GM12878 (cell line): ENCODE measurements at regions of chr11 and their contacts with region 1.

Region 1: DNA sequence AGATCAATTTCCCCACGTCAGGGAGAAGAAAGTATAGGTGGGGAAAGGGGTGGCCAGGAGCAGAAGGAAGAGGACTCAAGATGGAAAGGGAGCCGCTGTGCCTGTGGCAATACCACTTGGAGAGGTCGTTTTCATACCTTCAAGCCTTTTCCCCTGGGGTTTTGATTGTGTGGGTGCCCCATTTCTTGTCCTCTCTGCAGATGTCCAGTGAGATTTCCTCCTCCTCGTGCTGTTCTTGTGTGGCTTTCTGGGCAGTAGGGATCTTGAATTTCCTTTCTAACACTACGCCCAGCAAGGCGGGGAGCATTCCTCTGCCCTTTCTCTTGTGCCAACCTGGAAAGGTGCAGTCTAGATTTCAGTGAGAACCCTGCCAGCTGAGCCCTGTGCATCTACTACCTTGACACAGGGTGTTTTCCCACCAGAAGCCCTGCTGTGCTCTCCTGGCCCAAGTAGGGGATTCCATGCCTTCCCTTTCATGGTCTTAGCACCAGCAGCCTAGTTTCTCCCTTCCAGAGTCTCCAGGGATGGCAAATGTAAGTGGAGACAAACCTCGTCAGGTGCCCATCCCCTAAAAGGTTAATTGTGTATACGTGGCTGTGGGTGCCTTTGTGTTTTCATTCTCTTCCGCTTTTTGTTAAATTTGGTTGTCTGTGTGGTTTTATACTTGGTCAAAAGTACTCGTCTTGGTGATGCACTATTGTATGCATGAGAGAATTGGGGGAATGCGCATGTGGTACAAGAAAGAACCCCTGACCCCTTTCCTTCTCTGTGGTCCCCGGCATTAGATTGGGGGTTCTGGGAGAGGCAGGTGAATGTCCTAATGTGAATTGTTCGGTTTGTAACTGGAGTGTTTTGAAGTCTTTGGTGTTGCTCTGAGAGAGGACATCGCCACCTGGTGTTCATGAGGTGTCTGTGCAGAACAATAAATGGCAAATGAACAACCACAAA is 71.4 kb upstream of the MPEG1 start:
- DNase-seq: peak; percentile 71
- ATAC-seq: peak; percentile 86
- H3K4me3 ChIP-seq: peak overlapping the region; percentile 37
- H3K27ac ChIP-seq: peak overlapping the region; percentile 63
- H3K4me1 ChIP-seq: peaks cover 18% of the 10 kb centered on the region
- H3K27me3 ChIP-seq: no peaks in the 10 kb centered on the region
- CTCF ChIP-seq: peak; percentile 81 to 83 (median 82)
- EP300 ChIP-seq: 0 out of 4 replicates have a peak, but pooled peaks of 1 of the 2 experiments have one; percentile 26
- POLR2A ChIP-seq: no peak
- RAD21 ChIP-seq: peak; percentile 84

Region 2: DNA sequence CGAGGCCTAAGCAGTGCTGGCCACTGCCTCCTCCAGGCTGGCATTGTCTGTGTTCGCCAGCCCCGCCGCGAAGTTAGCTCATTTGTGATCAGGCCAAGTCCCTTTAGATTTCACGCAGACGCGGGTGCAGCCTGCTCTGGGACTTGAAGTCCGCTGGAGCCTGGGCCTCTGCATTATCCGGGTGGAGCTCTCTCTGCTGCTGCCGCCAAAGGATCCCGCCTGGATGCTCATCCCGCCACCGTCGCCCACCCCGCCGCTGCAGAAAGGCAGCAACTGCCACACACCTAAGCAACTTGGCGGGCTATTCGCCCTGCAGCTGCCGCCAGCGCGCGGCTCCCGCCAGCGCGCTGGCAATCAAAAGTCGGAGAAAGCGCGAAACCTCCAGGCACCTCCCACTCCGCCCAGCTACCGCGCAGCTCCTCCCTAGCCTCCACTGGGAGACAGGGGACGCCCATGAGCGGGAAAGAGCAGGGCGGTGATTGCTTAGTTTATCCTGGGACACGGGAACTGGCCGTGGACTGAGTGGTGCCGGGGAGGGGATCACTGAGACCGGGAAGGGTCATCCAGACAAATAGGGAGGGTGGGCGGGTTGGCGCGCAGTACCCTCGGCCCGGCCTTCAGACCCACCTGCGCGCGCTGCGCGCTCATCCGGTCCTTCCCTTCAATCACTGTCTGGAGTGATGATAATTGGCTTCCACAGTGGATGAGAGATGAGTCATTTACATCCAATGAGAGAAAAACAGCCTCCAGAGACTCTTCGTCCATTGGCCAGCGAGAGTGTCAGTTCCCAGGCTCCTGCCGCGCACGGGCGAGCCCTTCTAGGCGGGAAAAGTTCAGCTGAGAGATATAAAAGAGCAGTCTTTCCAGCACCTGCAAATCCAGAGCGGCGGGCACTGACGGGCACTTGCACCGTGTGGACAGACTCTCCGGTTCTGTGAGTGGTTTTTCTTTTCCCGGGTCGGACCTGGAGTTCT is 177.4 kb before region 1 on chr11 and contains the start of gene FAM111B:
- CTCF ChIA-PET with region 1: no interaction called
- POLR2A ChIA-PET with region 1: no interaction called
- RAD21 ChIA-PET with region 1: no interaction called
- SMC1A ChIA-PET with region 1: no interaction called
- in situ Hi-C with region 1: no loop called
- intact Hi-C with region 1: loop called (anchors 10 kb)
- DNase-seq: peak; percentile 84
- ATAC-seq: peak; percentile 85
- H3K4me3 ChIP-seq: peak within 1 kb of the TSS; percentile 79
- H3K27ac ChIP-seq: peak within 1 kb of the TSS; percentile 89
- H3K4me1 ChIP-seq: peaks cover 7% of the 10 kb centered on the region
- H3K27me3 ChIP-seq: no peaks in the 10 kb centered on the region
- CTCF ChIP-seq: no peak
- EP300 ChIP-seq: no peak
- POLR2A ChIP-seq: peak; percentile 79
- RAD21 ChIP-seq: no peak
- polyA plus RNA-seq, gene FAM111B: 42.0 to 65.3 TPM

Region 3: DNA sequence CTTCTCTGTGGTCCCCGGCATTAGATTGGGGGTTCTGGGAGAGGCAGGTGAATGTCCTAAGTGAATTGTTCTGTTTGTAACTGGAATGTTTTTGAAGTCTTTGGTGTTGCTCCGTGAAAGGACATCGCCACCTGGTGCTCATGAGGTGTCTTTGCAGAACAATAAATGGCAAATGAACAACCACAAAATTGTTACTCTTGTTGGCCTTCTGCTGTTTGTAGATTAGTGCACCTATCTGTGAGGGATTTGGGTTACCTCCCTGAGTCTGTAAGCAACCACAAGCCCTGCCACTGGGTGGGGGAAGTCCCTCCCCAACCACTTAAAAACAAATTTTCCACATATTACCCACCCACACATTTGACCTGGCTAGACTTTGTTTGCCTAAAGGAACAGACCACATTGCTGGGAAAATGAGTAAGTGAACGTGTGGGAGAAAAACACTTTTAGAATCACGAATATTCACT is 76.1 kb before region 1 on chr11:
- CTCF ChIA-PET with region 1: interaction called, 10 read pairs
- POLR2A ChIA-PET with region 1: no interaction called
- RAD21 ChIA-PET with region 1: interaction called, 7 read pairs
- SMC1A ChIA-PET with region 1: interaction called, 4 read pairs
- in situ Hi-C with region 1: no loop called
- intact Hi-C with region 1: loop called (anchors 1 kb)
- DNase-seq: peak; percentile 89
- ATAC-seq: peak; percentile 77
- H3K4me3 ChIP-seq: peak overlapping the region; percentile 64
- H3K27ac ChIP-seq: peak overlapping the region; percentile 76
- H3K4me1 ChIP-seq: peaks cover 51% of the 10 kb centered on the region
- H3K27me3 ChIP-seq: no peaks in the 10 kb centered on the region
- CTCF ChIP-seq: peak; percentile 74 to 87 (median 78); a peak in 5 of 6 replicates
- EP300 ChIP-seq: peak; percentile 62 to 68; a peak in 3 of 4 replicates
- POLR2A ChIP-seq: no peak
- RAD21 ChIP-seq: peak; percentile 77

Region 4: GRCh38 chr11:59273373-59273841 is 10.7 kb before region 1 on chr11:
- CTCF ChIA-PET with region 1: interaction called, 6 read pairs
- POLR2A ChIA-PET with region 1: interaction called, 4 read pairs
- RAD21 ChIA-PET with region 1: interaction called, 4 read pairs
- SMC1A ChIA-PET with region 1: interaction called, 12 read pairs
- in situ Hi-C with region 1: no loop called
- intact Hi-C with region 1: no loop called
- DNase-seq: peak; percentile 79
- ATAC-seq: peak; percentile 93
- H3K4me3 ChIP-seq: no peak overlapping the region
- H3K27ac ChIP-seq: peak overlapping the region; percentile 77
- H3K4me1 ChIP-seq: peaks cover 35% of the 10 kb centered on the region
- H3K27me3 ChIP-seq: no peaks in the 10 kb centered on the region
- CTCF ChIP-seq: no peak
- EP300 ChIP-seq: peak; percentile 88 to 96
- POLR2A ChIP-seq: no peak
- RAD21 ChIP-seq: no peak

Region 5: DNA sequence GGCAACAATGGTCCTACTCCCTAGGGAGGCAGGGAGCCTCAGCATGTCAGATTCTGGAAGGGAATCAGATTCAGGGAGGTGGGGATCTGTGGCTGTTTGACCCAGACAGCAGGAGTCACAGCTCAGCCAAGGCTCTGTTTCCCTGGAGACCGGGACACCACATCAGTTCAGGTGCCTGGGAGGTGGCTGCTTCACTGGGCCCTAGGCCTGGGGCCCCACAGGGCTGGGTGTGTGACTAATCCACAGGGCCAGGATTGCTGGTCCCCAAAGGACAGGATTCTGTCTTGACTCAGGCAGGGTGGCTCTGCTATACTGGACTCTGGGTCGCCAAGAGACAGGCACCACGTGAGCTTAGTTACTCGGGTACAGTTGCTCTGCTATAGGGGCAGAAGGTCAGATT is 71.1 kb after region 1 on chr11:
- CTCF ChIA-PET with region 1: no interaction called
- POLR2A ChIA-PET with region 1: no interaction called
- RAD21 ChIA-PET with region 1: no interaction called
- SMC1A ChIA-PET with region 1: no interaction called
- in situ Hi-C with region 1: no loop called
- intact Hi-C with region 1: no loop called
- DNase-seq: no peak
- ATAC-seq: no peak
- H3K4me3 ChIP-seq: no peak overlapping the region
- H3K27ac ChIP-seq: no peak overlapping the region
- H3K4me1 ChIP-seq: no peaks in the 10 kb centered on the region
- H3K27me3 ChIP-seq: no peaks in the 10 kb centered on the region
- CTCF ChIP-seq: no peak
- EP300 ChIP-seq: no peak
- POLR2A ChIP-seq: no peak
- RAD21 ChIP-seq: no peak

Region 6: GRCh38 chr11:59550368-59550841 is 266.3 kb after region 1 on chr11:
- CTCF ChIA-PET with region 1: no interaction called
- POLR2A ChIA-PET with region 1: no interaction called
- RAD21 ChIA-PET with region 1: no interaction called
- SMC1A ChIA-PET with region 1: no interaction called
- in situ Hi-C with region 1: no loop called
- intact Hi-C with region 1: loop called (anchors 5 kb)
- DNase-seq: peak; percentile 96
- ATAC-seq: peak; percentile 96
- H3K4me3 ChIP-seq: peak overlapping the region; percentile 74
- H3K27ac ChIP-seq: peak overlapping the region; percentile 83
- H3K4me1 ChIP-seq: no peaks in the 10 kb centered on the region
- H3K27me3 ChIP-seq: no peaks in the 10 kb centered on the region
- CTCF ChIP-seq: peak; percentile 39 to 59 (median 57)
- EP300 ChIP-seq: peak in 1 of 2 experiments; percentile 57; a peak in 1 of 4 replicates
- POLR2A ChIP-seq: peak; percentile 40; the same call in 1 of the 2 replicates
- RAD21 ChIP-seq: no peak